ENCODE measurements at regions of chr1 and their contacts with region 1.

Region 1: GRCh38 chr1:237041795-237042525 is at the start of gene RYR2:
- DNase-seq: peak in 9 of 10 donors; percentile 23 to 95 (median 52)

Region 2: GRCh38 chr1:237084258-237085077 is 42.5 kb after region 1 on chr1:
- intact Hi-C with region 1: no loop called
- DNase-seq: no peak

Region 3: DNA sequence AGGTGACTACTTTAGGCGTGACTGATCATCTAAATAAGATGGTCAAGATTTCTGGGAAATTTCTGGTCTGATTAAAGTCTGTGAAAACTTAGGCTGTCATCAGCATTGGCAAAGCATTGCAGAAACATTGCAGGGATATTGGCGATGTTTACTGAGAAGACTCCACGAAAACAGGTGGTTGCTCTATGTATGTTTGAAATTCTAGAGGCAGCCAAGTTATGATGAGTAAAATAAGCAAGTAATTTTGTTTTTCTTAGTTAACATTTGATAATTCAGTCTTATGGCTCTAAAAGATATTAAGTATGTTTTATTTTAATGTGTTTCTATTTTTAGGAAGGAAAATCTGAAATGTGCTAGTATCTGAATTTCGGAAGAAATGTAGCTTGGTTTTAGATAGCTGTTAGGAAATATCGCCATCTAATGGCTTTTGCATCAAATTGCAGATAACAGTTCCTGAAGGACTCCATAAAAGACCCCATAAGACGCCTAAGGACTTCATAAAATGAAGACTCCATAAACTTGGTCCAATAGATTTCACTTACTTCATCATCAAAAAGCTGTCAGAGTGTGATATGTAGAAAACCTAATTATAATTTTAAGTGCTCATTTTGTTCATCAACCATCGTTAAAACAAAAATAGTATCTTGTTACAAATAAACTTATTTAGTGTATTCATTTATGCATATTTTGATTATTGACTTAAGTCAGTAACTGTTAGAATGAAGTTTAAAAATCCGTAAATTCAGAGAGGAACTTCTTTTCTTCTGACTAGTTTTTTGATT is 344.6 kb after region 1 on chr1:
- intact Hi-C with region 1: loop called (anchors 10 kb)
- DNase-seq: no peak